ENCODE measurements at regions of chr15 and their contacts with region 1.

Region 1: DNA sequence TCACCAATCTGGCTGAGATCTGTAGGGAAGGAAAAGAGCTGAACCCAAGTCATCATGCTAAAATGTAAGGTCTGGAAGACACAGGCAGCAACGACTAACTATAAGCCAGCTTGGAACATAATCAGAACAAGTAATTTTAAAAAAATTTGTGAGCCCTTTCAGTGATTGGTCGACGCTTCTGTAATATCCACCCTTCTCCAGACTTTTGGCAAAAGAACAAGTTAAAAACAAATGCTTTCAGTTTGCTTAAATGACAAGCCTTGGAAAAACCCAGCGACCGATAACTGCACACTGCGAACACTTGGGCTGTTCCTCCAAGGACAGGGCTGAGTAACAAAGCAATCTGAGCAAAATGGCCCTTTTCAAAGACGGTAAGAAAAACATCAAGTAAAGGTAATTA is 49.6 kb downstream of the PCSK6 start:
- DNase-seq: no peak
- ATAC-seq: peak; percentile 58

Region 2: GRCh38 chr15:100457201-100457600 is 982.7 kb before region 1 on chr15:
- intact Hi-C with region 1: no loop called
- DNase-seq: no peak
- ATAC-seq: no peak

Region 3: GRCh38 chr15:101179341-101180153 is 260.4 kb before region 1 on chr15:
- intact Hi-C with region 1: no loop called
- DNase-seq: no peak
- ATAC-seq: no peak

Region 4: GRCh38 chr15:101413239-101413638 is 26.7 kb before region 1 on chr15:
- intact Hi-C with region 1: no loop called
- DNase-seq: no peak
- ATAC-seq: no peak

Region 5: GRCh38 chr15:101482526-101483371 is 42.8 kb after region 1 on chr15:
- intact Hi-C with region 1: loop called (anchors 5 kb)
- DNase-seq: no peak
- ATAC-seq: peak; percentile 83